Mammary epithelial cell (primary cell): ENCODE measurements at regions of chr6 and their contacts with region 1.

Region 1: GRCh38 chr6:43013843-43014433 is at the starts of genes KLHDC3 and MEA1:
- DNase-seq: peak; percentile 100
- H3K4me3 ChIP-seq: peak within 1 kb of the TSS; percentile 86 to 92 (median 91)
- H3K27ac ChIP-seq: peak within 1 kb of the TSS; percentile 51
- H3K4me1 ChIP-seq: peaks cover 18% of the 10 kb centered on the region
- H3K27me3 ChIP-seq: no peaks in the 10 kb centered on the region
- CTCF ChIP-seq: no peak
- total RNA-seq, gene KLHDC3: 36.4 to 56.2 TPM
- total RNA-seq, gene MEA1: 35.2 to 80.3 TPM

Region 2: GRCh38 chr6:42963855-42964605 is 49.9 kb before region 1 on chr6:
- CTCF ChIA-PET with region 1: no interaction called
- dilution Hi-C with region 1: no loop called
- in situ Hi-C with region 1: no loop called
- intact Hi-C with region 1: loop called (anchors 5 kb)
- DNase-seq: peak; percentile 37
- H3K4me3 ChIP-seq: no peak overlapping the region
- H3K27ac ChIP-seq: no peak overlapping the region
- H3K4me1 ChIP-seq: peaks cover 16% of the 10 kb centered on the region
- H3K27me3 ChIP-seq: no peaks in the 10 kb centered on the region
- CTCF ChIP-seq: peak; percentile 21 to 40

Region 3: DNA sequence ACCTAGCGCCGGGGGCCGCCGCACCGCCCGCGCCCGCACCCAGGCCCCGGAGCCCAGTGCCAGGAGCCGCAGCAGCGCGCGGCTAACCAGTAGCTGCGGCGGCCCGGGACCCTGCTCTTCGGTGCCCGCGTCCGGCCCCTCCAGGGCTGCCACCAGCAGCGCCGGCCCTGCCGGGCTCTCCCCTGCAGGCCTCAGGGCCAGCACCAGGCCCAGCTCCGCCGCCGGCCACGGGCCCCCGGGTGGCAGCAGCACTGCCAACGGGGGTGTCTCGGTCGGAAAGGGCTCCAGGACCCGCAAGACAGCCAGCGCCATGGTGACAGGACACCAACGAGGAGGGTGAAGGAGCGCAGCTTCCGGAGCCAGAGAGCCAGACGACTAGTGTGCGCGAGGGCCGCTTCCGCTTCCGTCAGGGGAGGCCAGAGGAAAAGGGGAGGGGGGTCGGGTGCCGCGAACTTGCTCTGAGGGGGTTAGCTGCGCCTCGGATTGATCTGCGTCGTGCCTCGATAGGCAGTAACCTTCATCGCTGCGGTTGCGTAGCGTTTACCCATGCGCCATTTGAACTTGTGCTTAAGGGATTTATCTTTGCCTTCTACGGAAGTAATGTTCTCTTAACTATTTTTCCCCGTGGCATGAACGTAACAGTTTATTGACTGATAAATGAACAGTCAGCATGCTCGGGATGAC is 35.0 kb before region 1 on chr6 and contains the start of gene PEX6:
- CTCF ChIA-PET with region 1: no interaction called
- dilution Hi-C with region 1: no loop called
- in situ Hi-C with region 1: no loop called
- intact Hi-C with region 1: loop called (anchors 2 kb)
- DNase-seq: peak; percentile 79
- H3K4me3 ChIP-seq: peak within 1 kb of the TSS; percentile 47 to 82 (median 58)
- H3K27ac ChIP-seq: peak within 1 kb of the TSS; percentile 63
- H3K4me1 ChIP-seq: peaks cover 30% of the 10 kb centered on the region
- H3K27me3 ChIP-seq: no peaks in the 10 kb centered on the region
- CTCF ChIP-seq: no peak
- total RNA-seq, gene PEX6: 12.9 to 22.2 TPM

Region 4: GRCh38 chr6:43059168-43060033 is 45.5 kb after region 1 on chr6 and contains the starts of genes KLC4 and MRPL2:
- CTCF ChIA-PET with region 1: no interaction called
- dilution Hi-C with region 1: no loop called
- in situ Hi-C with region 1: no loop called
- intact Hi-C with region 1: loop called (anchors 2 kb)
- DNase-seq: peak; percentile 98
- H3K4me3 ChIP-seq: peak within 1 kb of the TSS; percentile 86 to 95 (median 89)
- H3K27ac ChIP-seq: peak within 1 kb of the TSS; percentile 80
- H3K4me1 ChIP-seq: peaks cover 21% of the 10 kb centered on the region
- H3K27me3 ChIP-seq: no peaks in the 10 kb centered on the region
- CTCF ChIP-seq: no peak
- total RNA-seq, gene KLC4: 17.5 to 20.2 TPM
- total RNA-seq, gene MRPL2: 13.3 to 75.2 TPM

Region 5: DNA sequence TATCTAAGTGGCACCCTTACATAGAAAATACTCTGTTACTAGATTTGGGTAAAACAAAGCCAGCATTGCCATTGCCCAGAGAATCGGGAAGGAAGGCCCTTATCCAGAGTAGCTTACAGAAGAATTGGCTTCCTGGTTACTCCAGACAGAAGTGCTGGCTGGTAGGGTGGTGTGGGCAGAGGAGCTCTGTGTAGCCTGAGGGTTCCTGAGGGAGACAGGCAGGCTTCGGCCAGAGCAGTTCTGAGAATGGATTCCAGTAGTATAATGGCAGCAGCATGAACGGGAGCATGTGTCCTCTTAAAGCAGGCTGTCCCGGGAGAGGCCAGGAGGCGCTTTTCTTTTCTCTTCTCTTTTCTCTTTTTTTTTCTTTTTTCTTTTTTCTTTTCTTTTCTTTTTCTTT is 180.0 kb after region 1 on chr6:
- CTCF ChIA-PET with region 1: no interaction called
- dilution Hi-C with region 1: no loop called
- in situ Hi-C with region 1: no loop called
- intact Hi-C with region 1: no loop called
- DNase-seq: no peak
- H3K4me3 ChIP-seq: no peak overlapping the region
- H3K27ac ChIP-seq: no peak overlapping the region
- H3K4me1 ChIP-seq: no peaks in the 10 kb centered on the region
- H3K27me3 ChIP-seq: no peaks in the 10 kb centered on the region
- CTCF ChIP-seq: no peak

Region 6: GRCh38 chr6:43334466-43335095 is 320.6 kb after region 1 on chr6:
- CTCF ChIA-PET with region 1: no interaction called
- dilution Hi-C with region 1: no loop called
- in situ Hi-C with region 1: no loop called
- intact Hi-C with region 1: loop called (anchors 5 kb)
- DNase-seq: peak; percentile 47
- H3K4me3 ChIP-seq: no peak overlapping the region
- H3K27ac ChIP-seq: no peak overlapping the region
- H3K4me1 ChIP-seq: no peaks in the 10 kb centered on the region
- H3K27me3 ChIP-seq: no peaks in the 10 kb centered on the region
- CTCF ChIP-seq: peak; percentile 58 to 67